Dorsolateral prefrontal cortex (tissue), 120 donors: ENCODE measurements at regions of chr9 and their contacts with region 1.

Region 1: GRCh38 chr9:114033397-114034103 is 44.5 kb downstream of the AMBP start:
- DNase-seq: peak in 4 of 10 donors; percentile 24 to 53 (median 43)
- H3K4me3 ChIP-seq: no peak overlapping the region
- H3K27ac ChIP-seq: no peak overlapping the region
- H3K27me3 ChIP-seq: no peaks in the 10 kb centered on the region
- CTCF ChIP-seq: peak in 55 of 56 donors; percentile 25 to 83 (median 59)

Region 2: GRCh38 chr9:113682297-113682771 is 351.2 kb before region 1 on chr9:
- intact Hi-C with region 1: loop called (anchors 5 to 10 kb)
- DNase-seq: peak in 9 of 10 donors; percentile 45 to 83 (median 71)
- H3K4me3 ChIP-seq: no peak overlapping the region
- H3K27ac ChIP-seq: no peak overlapping the region
- H3K27me3 ChIP-seq: peaks cover 0 to 12% (median under 1%) of the 10 kb centered on the region in 45 donors
- CTCF ChIP-seq: peak; percentile 83 to 98 (median 92)

Region 3: DNA sequence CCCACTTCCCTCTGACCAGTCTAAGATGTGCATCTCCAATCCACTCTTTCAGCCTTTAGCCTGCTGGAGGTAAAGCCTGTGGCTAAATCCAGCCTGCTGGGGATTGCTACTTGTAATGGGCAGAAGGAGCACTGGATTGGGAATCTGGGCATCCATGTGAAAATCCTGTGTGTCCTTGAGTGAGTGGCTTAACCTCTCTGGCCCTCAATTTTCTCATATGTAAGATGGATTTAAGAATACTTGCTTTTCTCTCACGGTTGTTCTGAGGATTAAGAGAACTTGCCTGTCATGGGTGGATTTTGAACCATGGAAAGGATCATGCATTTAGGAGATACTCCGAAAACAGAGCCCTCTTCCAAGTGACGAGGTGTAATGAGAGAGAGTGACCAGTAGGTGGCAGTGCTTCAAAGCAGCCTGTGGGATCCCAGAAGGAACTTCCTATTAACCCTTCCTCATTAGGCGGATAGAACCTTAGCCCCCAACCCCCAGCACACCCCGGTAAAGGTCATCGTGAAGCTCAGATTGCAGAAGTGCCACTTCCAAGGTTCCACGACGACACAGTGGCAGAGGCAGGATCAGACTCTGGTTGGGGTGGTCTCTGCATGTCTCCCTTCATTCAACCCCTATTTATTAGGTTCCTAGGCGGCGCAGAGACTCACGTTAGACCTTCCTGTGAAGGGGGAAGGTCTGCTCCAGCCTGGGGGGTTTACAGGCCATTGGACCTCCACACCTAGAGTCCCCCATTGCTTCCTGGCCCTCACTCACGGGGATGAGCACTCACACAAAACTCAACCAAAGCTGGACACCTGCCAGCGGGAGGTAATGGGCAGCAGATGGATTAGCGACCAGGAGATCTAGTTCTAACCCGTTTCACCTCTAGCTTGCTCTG is 226.1 kb before region 1 on chr9:
- intact Hi-C with region 1: loop called (anchors 2 kb)
- DNase-seq: peak in 6 of 10 donors; percentile 25 to 59 (median 42)
- H3K4me3 ChIP-seq: peak overlapping the region in 20 of 59 donors; percentile 5 to 40 (median 26)
- H3K27ac ChIP-seq: no peak overlapping the region
- H3K27me3 ChIP-seq: peaks cover 0 to 16% (median 0%) of the 10 kb centered on the region in 45 donors
- CTCF ChIP-seq: peak; percentile 68 to 96 (median 90)

Region 4: DNA sequence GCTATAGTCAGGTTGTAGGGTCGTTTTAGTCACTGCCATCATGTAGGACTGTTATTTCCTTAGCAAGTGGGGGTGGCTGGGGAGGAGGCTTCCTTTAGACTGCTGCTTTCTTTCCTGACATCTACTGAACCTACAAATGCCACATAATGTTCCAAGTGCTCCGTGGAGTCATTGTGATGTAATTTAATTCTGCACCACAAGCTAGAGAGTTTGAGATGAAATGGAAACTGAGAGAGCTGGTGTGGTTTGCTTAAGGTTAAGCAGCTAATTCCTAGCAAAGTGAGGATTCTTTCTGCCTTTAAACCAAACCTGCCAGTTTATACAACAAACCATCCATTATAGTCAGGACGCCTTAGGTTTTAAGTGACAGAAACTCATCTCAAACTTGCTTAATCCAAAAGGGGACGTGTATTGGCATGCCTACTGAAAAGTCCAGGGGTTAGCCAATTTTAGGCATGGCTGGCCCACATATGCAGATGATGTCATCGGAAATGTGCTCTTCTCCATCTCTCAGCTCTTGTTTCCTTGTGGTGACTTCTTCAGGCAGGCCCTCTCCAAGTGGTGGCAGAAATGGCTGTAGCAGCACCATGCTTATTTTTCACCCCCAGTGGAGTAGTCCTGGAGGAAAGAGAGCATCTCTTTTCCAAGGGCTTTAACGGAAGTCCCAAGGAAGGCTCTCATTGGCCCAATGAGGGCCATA is 127.0 kb before region 1 on chr9:
- intact Hi-C with region 1: no loop called
- DNase-seq: no peak
- H3K4me3 ChIP-seq: no peak overlapping the region
- H3K27ac ChIP-seq: no peak overlapping the region
- H3K27me3 ChIP-seq: no peaks in the 10 kb centered on the region
- CTCF ChIP-seq: no peak

Region 5: GRCh38 chr9:113993838-113994540 is 39.6 kb before region 1 on chr9:
- intact Hi-C with region 1: loop called in 1 of 2 experiments (anchors 5 kb)
- DNase-seq: peak; percentile 40 to 92 (median 80)
- H3K4me3 ChIP-seq: peak overlapping the region in 5 of 59 donors; percentile 8 to 28 (median 13)
- H3K27ac ChIP-seq: peak overlapping the region in 17 of 59 donors; percentile 0 to 80 (median 45)
- H3K27me3 ChIP-seq: no peaks in the 10 kb centered on the region
- CTCF ChIP-seq: peak in 5 of 56 donors; percentile 4 to 31 (median 19)

Region 6: DNA sequence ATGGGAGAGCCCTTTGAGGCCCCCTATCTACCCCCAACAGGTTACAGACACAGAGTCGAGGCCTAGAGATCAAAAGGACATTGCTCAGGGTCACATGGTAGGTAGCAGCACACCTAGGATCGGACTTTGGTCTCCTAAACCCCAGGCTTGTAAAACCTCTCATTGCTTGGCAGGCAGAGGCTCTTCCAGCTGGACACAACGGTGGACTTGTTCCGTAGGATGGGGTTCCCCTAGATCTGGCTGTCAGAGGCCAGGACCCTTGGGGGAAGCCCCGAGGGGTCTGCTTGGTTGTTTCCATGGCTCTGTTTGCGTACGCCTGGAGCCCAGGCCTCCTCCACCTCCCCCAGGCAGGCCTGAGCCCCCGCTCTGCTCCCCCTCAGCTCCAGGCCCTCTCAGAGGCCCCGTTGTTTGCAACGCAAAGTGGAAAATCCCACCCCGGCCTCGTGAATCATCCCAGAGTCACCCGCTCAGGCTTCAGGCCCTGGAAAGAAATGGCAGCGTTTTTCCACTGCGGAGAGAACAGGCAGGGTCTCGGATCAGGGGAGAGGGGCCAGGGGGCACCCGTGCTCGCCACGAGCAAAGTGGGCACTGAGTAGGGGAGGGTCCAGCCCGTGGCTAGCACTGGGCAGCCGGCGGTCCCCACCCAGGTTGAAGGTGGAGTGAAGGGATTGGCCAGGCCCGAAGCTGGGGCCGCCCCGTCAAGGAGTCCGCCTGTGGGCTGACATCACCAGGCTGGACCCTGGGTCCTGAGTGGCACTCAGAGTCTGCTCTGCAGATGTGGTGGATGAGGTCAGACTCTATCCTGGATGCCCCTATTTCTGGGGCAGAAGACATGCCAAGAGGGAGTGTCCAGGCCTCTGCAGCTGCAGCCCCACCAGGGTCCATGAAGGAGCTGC is 141.6 kb after region 1 on chr9:
- intact Hi-C with region 1: no loop called
- DNase-seq: peak in 5 of 10 donors; percentile 36 to 63 (median 51)
- H3K4me3 ChIP-seq: no peak overlapping the region
- H3K27ac ChIP-seq: peak overlapping the region in 42 of 59 donors; percentile 4 to 90 (median 60)
- H3K27me3 ChIP-seq: no peaks in the 10 kb centered on the region
- CTCF ChIP-seq: no peak